Heart right ventricle (tissue), 16 donors: ENCODE measurements at regions of chr3 and their contacts with region 1.

Region 1: GRCh38 chr3:69240651-69241568 is 118.5 kb upstream of the LMOD3 start:
- DNase-seq: no peak
- ATAC-seq: no peak
- H3K4me3 ChIP-seq: no peak overlapping the region
- H3K27ac ChIP-seq: peak overlapping the region in 1 of 10 donors; percentile 11
- H3K4me1 ChIP-seq: peaks cover 5 to 52% (median 24%) of the 10 kb centered on the region in 9 donors
- H3K27me3 ChIP-seq: no peaks in the 10 kb centered on the region
- CTCF ChIP-seq: no peak

Region 2: GRCh38 chr3:69200384-69201068 is 40.4 kb before region 1 on chr3:
- intact Hi-C with region 1: loop called in 1 of 10 experiments (anchors 5 kb)
- DNase-seq: peak in 1 of 2 donors; percentile 35
- ATAC-seq: peak; percentile 61 to 87 (median 75)
- H3K4me3 ChIP-seq: peak overlapping the region; percentile 10 to 49 (median 40)
- H3K27ac ChIP-seq: peak overlapping the region in 9 of 10 donors; percentile 28 to 81 (median 70)
- H3K4me1 ChIP-seq: peaks cover 0 to 45% (median 26%) of the 10 kb centered on the region in 9 donors
- H3K27me3 ChIP-seq: no peaks in the 10 kb centered on the region
- CTCF ChIP-seq: no peak

Region 3: GRCh38 chr3:69260216-69260787 is 19.4 kb after region 1 on chr3:
- intact Hi-C with region 1: loop called in 1 of 10 experiments (anchors 2 kb)
- DNase-seq: no peak
- ATAC-seq: no peak
- H3K4me3 ChIP-seq: no peak overlapping the region
- H3K27ac ChIP-seq: no peak overlapping the region
- H3K4me1 ChIP-seq: no peaks in the 10 kb centered on the region
- H3K27me3 ChIP-seq: no peaks in the 10 kb centered on the region
- CTCF ChIP-seq: no peak

Region 4: GRCh38 chr3:69288161-69288895 is 47.4 kb after region 1 on chr3:
- intact Hi-C with region 1: loop called in 3 of 10 experiments (anchors 5 to 10 kb)
- DNase-seq: no peak
- ATAC-seq: no peak
- H3K4me3 ChIP-seq: no peak overlapping the region
- H3K27ac ChIP-seq: peak overlapping the region in 1 of 10 donors; percentile 40
- H3K4me1 ChIP-seq: peaks cover 0 to 32% (median 4%) of the 10 kb centered on the region in 9 donors
- H3K27me3 ChIP-seq: no peaks in the 10 kb centered on the region
- CTCF ChIP-seq: no peak

Region 5: DNA sequence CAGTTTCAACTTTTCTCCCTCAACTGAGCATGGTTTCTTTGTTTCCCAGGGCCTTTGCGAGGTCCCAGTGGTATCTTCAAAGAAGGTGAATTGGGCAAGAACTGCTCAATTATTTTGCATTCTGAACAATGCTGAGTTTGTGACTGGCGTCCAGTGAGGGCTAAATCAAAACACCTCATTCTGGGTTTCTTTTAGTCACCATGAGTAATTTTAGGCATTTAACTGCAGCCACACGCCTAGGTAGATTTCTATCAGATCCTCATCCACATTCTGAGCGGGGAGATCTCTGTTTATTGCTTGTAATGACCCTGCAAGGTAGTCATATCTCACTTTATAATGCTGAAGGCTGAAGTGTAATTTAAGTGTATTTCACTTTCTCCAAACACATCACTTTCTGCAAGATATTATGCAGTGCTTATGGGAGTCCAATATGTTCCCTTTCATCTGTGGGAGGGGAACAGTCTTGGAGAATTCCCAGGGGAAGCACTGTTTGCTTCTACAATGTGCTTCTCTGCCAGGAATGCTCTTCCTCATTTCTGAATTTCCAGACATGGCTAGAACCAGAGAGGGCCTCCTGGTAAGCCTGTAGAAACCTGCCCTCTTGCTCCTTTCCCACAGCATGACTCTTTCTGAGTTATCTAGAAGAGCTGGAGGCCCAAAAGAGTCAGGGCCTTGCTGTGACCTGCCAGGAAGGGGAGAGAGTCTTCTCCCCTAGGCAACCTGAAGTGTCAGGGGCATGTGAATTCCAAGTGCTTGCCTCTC is 53.3 kb after region 1 on chr3:
- intact Hi-C with region 1: loop called in 3 of 10 experiments (anchors 5 to 10 kb)
- DNase-seq: no peak
- ATAC-seq: peak in 4 of 8 donors; percentile 29 to 51 (median 32)
- H3K4me3 ChIP-seq: no peak overlapping the region
- H3K27ac ChIP-seq: peak overlapping the region in 4 of 10 donors; percentile 9 to 60 (median 27)
- H3K4me1 ChIP-seq: peaks cover 3 to 40% (median 19%) of the 10 kb centered on the region in 9 donors
- H3K27me3 ChIP-seq: no peaks in the 10 kb centered on the region
- CTCF ChIP-seq: no peak